Spleen (tissue), 13 donors: ENCODE measurements at regions of chrX and their contacts with region 1.

Region 1: DNA sequence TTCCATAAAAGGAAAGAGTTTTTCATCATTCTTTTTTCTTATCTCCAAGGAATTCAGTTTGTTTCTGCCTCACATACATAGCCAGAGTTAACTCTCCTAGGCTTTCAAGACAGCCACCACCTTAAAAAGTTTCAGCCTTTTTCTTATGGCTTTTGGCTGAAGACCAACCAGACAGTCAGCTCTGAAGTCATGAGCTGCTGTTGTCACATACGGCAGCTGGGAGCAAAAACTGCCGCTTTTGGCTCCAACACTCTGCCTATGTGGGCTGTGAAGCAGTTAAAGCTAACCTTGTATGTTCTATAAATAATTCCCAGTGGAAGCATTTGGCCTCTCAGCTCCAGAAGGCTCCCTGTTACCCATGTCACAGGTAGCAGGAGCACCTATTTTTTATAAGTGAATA is 104.1 kb downstream of the KLHL4 start:
- DNase-seq: no peak
- H3K4me3 ChIP-seq: no peak overlapping the region
- H3K27ac ChIP-seq: no peak overlapping the region
- H3K4me1 ChIP-seq: no peaks in the 10 kb centered on the region
- H3K27me3 ChIP-seq: no peaks in the 10 kb centered on the region
- CTCF ChIP-seq: no peak
- POLR2A ChIP-seq: no peak

Region 2: GRCh38 chrX:87562524-87562923 is 59.2 kb before region 1 on chrX:
- intact Hi-C with region 1: loop called (anchors 10 kb)
- DNase-seq: no peak
- H3K4me3 ChIP-seq: no peak overlapping the region
- H3K27ac ChIP-seq: no peak overlapping the region
- H3K4me1 ChIP-seq: no peaks in the 10 kb centered on the region
- H3K27me3 ChIP-seq: peaks cover 0 to 7% (median 0%) of the 10 kb centered on the region in 7 donors
- CTCF ChIP-seq: no peak
- POLR2A ChIP-seq: no peak